GM12878 (cell line): ENCODE measurements at regions of chr1 and their contacts with region 1.

Region 1: GRCh38 chr1:216221260-216221700 is 202.0 kb downstream of the USH2A start:
- DNase-seq: peak; percentile 27
- ATAC-seq: peak; percentile 100
- H3K4me3 ChIP-seq: 0 out of 2 replicates have a peak overlapping the region, but pooled peaks have one; percentile 30
- H3K27ac ChIP-seq: no peak overlapping the region
- H3K4me1 ChIP-seq: no peaks in the 10 kb centered on the region
- H3K27me3 ChIP-seq: no peaks in the 10 kb centered on the region
- CTCF ChIP-seq: peak; percentile 68 to 78 (median 69)
- EP300 ChIP-seq: no peak
- POLR2A ChIP-seq: no peak
- RAD21 ChIP-seq: peak; percentile 60

Region 2: GRCh38 chr1:215888159-215888558 is 333.1 kb before region 1 on chr1:
- CTCF ChIA-PET with region 1: interaction called, 15 read pairs
- POLR2A ChIA-PET with region 1: no interaction called
- RAD21 ChIA-PET with region 1: interaction called, 4 read pairs
- SMC1A ChIA-PET with region 1: interaction called, 5 read pairs
- in situ Hi-C with region 1: no loop called
- intact Hi-C with region 1: no loop called
- DNase-seq: no peak
- ATAC-seq: 0 out of 3 replicates have a peak, but pooled peaks have one; percentile 25
- H3K4me3 ChIP-seq: no peak overlapping the region
- H3K27ac ChIP-seq: no peak overlapping the region
- H3K4me1 ChIP-seq: no peaks in the 10 kb centered on the region; the same call in 1 of the 2 replicates
- H3K27me3 ChIP-seq: no peaks in the 10 kb centered on the region
- CTCF ChIP-seq: peak in 2 of 3 experiments; percentile 5 to 45; a peak in 2 of 6 replicates
- EP300 ChIP-seq: no peak
- POLR2A ChIP-seq: no peak
- RAD21 ChIP-seq: peak; percentile 50

Region 3: DNA sequence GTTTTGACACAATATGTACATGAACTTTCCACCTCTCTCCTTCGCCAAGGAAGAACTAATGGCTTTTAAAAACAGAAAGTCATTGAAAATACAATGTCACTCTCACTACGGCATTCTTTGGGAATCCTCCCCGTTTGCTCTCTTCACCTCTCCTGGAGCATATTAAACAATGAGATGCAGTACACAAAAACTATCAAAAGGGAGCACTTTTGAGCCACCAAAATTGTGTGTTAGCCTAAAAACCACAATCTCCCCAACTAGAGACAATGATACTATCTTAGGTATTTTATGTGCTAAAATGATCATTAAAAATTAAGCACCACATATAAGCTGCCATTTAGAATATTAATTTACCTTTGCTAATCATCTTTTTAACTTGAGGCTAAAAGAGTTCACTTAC is 228.7 kb before region 1 on chr1:
- CTCF ChIA-PET with region 1: interaction called, 30 read pairs
- POLR2A ChIA-PET with region 1: no interaction called
- RAD21 ChIA-PET with region 1: interaction called, 16 read pairs
- SMC1A ChIA-PET with region 1: interaction called, 15 read pairs
- in situ Hi-C with region 1: no loop called
- intact Hi-C with region 1: loop called (anchors 2 kb)
- DNase-seq: no peak
- ATAC-seq: peak; percentile 61
- H3K4me3 ChIP-seq: no peak overlapping the region
- H3K27ac ChIP-seq: no peak overlapping the region
- H3K4me1 ChIP-seq: no peaks in the 10 kb centered on the region
- H3K27me3 ChIP-seq: no peaks in the 10 kb centered on the region
- CTCF ChIP-seq: peak; percentile 22 to 52 (median 49); a peak in 5 of 6 replicates
- EP300 ChIP-seq: no peak
- POLR2A ChIP-seq: no peak
- RAD21 ChIP-seq: peak; percentile 58

Region 4: GRCh38 chr1:216119602-216120001 is 101.7 kb before region 1 on chr1:
- CTCF ChIA-PET with region 1: interaction called, 12 read pairs
- POLR2A ChIA-PET with region 1: no interaction called
- RAD21 ChIA-PET with region 1: interaction called, 4 read pairs
- SMC1A ChIA-PET with region 1: interaction called, 4 read pairs
- in situ Hi-C with region 1: no loop called
- intact Hi-C with region 1: no loop called
- DNase-seq: no peak
- ATAC-seq: peak; percentile 86
- H3K4me3 ChIP-seq: no peak overlapping the region
- H3K27ac ChIP-seq: no peak overlapping the region
- H3K4me1 ChIP-seq: no peaks in the 10 kb centered on the region
- H3K27me3 ChIP-seq: no peaks in the 10 kb centered on the region
- CTCF ChIP-seq: peak; percentile 35 to 55 (median 46); a peak in 5 of 6 replicates
- EP300 ChIP-seq: no peak
- POLR2A ChIP-seq: no peak
- RAD21 ChIP-seq: peak; percentile 47; the same call in 1 of the 2 replicates

Region 5: DNA sequence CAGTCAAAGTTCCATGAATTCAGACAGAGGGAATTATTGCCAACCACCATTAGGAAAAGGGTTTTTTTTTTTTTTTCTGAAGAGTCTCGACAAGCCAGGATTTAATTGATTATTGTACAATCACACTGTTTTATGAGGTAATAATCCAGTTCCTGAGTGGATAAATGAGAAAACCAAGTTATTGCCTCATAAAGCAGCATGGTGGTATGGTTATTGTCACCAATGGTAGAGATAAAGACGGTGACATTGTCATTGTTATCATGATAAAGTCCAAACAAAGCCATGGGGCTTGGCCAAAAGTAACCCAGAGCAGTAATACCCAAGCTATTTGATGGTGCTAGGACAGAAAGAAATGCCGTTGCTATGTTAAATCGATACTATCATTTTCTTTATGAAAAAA is 30.8 kb before region 1 on chr1:
- CTCF ChIA-PET with region 1: interaction called, 11 read pairs
- POLR2A ChIA-PET with region 1: no interaction called
- RAD21 ChIA-PET with region 1: interaction called, 4 read pairs
- SMC1A ChIA-PET with region 1: no interaction called
- in situ Hi-C with region 1: no loop called
- intact Hi-C with region 1: no loop called
- DNase-seq: no peak
- ATAC-seq: no peak
- H3K4me3 ChIP-seq: no peak overlapping the region
- H3K27ac ChIP-seq: no peak overlapping the region
- H3K4me1 ChIP-seq: no peaks in the 10 kb centered on the region
- H3K27me3 ChIP-seq: no peaks in the 10 kb centered on the region
- CTCF ChIP-seq: no peak
- EP300 ChIP-seq: no peak
- POLR2A ChIP-seq: no peak
- RAD21 ChIP-seq: no peak

Region 6: DNA sequence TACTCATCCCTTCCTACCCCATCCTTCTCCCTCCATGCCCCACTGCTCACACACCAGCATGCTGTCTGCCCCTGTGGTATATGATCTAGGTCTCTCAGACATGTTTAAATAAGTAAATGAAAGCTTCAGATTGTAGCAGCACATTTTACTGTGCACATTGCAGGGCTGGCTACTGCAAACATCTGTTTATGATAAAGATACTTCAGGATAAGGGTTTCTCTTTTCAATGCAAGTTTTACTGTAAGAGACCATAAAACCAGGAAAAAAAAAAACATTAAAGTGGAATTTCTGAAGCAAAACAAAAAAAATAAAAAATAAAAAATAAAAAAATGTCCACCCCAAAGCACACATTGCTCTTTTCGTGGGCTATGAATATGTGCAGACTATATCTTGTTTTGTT is 17.6 kb after region 1 on chr1:
- CTCF ChIA-PET with region 1: interaction called, 10 read pairs
- POLR2A ChIA-PET with region 1: no interaction called
- RAD21 ChIA-PET with region 1: interaction called, 5 read pairs
- SMC1A ChIA-PET with region 1: interaction called, 5 read pairs
- in situ Hi-C with region 1: no loop called
- intact Hi-C with region 1: no loop called
- DNase-seq: no peak
- ATAC-seq: no peak
- H3K4me3 ChIP-seq: no peak overlapping the region
- H3K27ac ChIP-seq: no peak overlapping the region
- H3K4me1 ChIP-seq: no peaks in the 10 kb centered on the region
- H3K27me3 ChIP-seq: no peaks in the 10 kb centered on the region
- CTCF ChIP-seq: no peak
- EP300 ChIP-seq: no peak
- POLR2A ChIP-seq: no peak
- RAD21 ChIP-seq: no peak